Activated CD4-positive, alpha-beta T cell treated with anti-CD3 and anti-CD28 coated beads, Interleukin-2, amount 10 ng/mL, durations not matched to agents 24 days and 14 days (primary cell): ENCODE measurements at regions of chr1 and their contacts with region 1.

Region 1: GRCh38 chr1:233364695-233365539 is 37.4 kb downstream of the MAP3K21 start:
- DNase-seq: no peak
- H3K4me3 Mint-ChIP-seq: no peak overlapping the region
- H3K27ac Mint-ChIP-seq: no peak overlapping the region
- H3K4me1 Mint-ChIP-seq: no peaks in the 10 kb centered on the region
- H3K27me3 Mint-ChIP-seq: peaks cover 9% of the 10 kb centered on the region

Region 2: DNA sequence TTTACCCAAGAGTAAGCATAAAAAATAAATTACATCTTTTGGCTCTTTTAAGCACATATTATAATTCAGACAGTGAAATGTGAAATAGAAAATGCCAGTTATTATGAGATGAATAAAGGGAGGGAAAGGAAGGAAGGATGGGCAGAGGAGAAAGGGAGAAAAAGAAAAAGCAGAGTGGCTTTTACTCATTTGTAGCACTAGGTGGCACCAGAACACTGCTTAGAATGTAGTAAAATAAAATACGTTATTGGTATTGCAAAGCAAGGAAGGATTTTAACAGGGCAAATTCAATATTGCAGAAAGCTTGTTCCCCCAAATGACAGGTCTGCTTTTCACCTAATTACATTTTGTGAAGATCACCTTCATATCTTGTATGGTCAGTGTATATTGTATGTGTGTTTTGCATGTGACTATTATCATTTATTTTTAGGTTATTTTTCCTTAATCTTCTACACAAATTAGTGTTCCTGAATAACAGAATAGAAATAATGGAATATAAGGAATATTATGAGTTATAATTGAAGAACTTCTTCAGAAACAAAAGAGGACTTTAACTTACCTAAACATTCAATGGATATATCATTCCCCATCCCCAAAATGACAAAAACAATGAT is 60.3 kb before region 1 on chr1:
- intact Hi-C with region 1: loop called (anchors 10 kb)
- DNase-seq: no peak
- H3K4me3 Mint-ChIP-seq: no peak overlapping the region
- H3K27ac Mint-ChIP-seq: no peak overlapping the region
- H3K4me1 Mint-ChIP-seq: no peaks in the 10 kb centered on the region
- H3K27me3 Mint-ChIP-seq: peaks cover 41% of the 10 kb centered on the region

Region 3: DNA sequence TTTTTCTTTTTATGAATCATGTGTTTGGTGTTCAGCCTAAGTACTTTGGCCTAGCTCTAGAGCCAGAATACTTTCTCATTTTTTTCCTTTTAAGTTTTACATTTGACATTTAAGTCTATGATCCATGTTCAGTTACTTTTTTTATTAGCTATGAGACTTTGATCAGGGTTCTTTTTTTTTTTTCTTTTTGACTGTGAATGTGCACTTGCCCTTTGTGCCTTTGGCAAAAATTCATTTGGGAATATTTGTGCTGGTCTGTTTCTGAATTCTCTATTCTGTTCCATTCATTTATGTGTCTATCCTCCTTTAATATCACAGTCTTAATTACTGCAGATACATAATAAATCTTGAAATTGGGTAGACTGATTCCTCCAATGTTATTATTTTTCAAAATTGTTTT is 56.4 kb after region 1 on chr1:
- intact Hi-C with region 1: no loop called
- DNase-seq: no peak
- H3K4me3 Mint-ChIP-seq: no peak overlapping the region
- H3K27ac Mint-ChIP-seq: no peak overlapping the region
- H3K4me1 Mint-ChIP-seq: no peaks in the 10 kb centered on the region
- H3K27me3 Mint-ChIP-seq: peaks cover 37% of the 10 kb centered on the region